CD4-positive, alpha-beta memory T cell (primary cell): ENCODE measurements at regions of chr22 and their contacts with region 1.

Region 1: DNA sequence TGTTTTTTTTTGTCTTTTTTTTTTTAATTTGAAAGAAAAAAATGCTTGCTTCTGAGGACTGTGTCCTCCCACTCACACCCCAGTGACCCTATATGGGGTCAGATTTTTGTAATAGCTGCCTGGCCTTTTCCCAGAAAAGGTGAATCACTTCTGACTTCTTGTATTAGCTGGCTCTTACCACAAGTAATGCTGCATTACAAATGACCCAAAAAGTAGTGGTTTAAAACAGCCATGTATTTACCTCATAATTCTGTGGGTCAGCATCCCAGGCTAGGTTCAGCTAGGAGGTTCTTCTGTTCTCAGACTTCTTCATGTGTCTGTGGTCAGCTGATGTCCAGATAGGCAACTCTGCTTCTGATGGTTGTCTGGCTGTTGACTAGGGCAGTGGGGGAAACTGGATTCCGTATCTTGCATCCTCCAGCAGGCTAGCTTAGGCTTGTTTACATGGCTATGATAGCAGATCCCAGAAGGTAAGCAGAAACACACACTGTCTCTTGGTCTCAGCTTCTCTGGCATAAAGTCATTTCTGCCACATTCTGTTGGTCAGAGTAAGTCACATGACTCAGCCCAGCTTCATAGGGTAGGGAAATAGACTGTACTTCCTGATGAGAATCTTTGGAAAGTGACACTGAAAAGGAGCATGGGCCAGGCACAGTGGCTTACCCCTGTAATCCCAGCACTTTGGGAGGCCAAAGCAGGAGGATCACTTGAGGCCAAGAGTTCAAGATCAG is 19.5 kb downstream of the LHFPL7 start:
- DNase-seq: no peak
- H3K4me3 ChIP-seq: no peak overlapping the region
- H3K4me3 Mint-ChIP-seq: no peak overlapping the region
- H3K27ac ChIP-seq: no peak overlapping the region
- H3K27ac Mint-ChIP-seq: no peak overlapping the region
- H3K4me1 ChIP-seq: no peaks in the 10 kb centered on the region
- H3K4me1 Mint-ChIP-seq: no peaks in the 10 kb centered on the region
- H3K27me3 ChIP-seq: no peaks in the 10 kb centered on the region
- H3K27me3 Mint-ChIP-seq: peaks cover 5 to 7% of the 10 kb centered on the region in 2 donors

Region 2: DNA sequence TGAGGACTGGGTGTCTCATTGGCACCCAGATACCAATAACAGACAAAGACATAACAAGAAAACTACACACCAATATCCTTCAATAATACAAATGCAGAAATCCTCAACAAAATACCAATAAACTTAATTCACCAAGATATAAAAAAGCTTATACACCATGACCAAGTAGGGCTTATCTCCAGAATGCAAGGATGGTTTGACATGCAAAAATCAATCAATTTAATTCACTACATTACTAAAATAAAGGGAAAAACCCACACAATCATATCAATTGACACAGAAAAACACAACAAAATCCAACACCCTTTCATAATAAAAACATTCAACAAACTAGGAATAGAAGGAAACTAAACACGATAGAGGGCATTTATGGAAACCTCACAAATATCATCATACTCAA is 21.1 kb before region 1 on chr22:
- CTCF ChIA-PET with region 1: no interaction called
- POLR2A ChIA-PET with region 1: no interaction called
- intact Hi-C with region 1: no loop called
- DNase-seq: no peak
- H3K4me3 ChIP-seq: no peak overlapping the region
- H3K4me3 Mint-ChIP-seq: no peak overlapping the region
- H3K27ac ChIP-seq: no peak overlapping the region
- H3K27ac Mint-ChIP-seq: no peak overlapping the region
- H3K4me1 ChIP-seq: no peaks in the 10 kb centered on the region
- H3K4me1 Mint-ChIP-seq: no peaks in the 10 kb centered on the region
- H3K27me3 ChIP-seq: no peaks in the 10 kb centered on the region
- H3K27me3 Mint-ChIP-seq: no peaks in the 10 kb centered on the region

Region 3: DNA sequence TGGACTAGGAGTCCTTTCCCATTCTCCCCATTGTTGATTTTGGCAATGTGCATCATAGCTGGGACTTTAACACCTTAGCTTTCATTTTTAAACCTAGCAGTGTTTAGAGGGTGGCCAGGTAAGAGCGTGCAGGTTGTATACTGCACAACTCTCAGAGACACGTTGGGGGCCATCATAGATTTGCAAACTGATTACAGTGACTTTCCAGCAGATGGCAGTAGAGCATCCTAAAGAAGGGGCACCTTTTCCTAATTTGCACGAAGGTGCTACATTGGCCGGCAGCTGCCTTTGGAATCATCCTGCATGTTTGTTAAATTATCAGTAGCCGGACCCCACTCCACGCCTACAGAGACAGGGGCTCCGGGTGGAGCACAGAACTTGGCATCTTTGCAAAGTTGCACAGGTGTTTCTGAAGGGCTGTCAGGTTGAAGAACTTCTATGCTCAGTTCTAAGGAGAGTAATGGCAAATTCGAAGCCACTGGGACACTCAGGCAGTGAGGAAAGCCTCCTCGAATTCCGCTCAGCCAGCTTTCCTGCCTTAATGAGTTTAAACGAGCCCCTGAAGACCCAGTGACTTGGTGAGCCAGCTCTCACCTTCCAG is 11.8 kb after region 1 on chr22:
- CTCF ChIA-PET with region 1: interaction called, 13 read pairs
- POLR2A ChIA-PET with region 1: no interaction called
- intact Hi-C with region 1: no loop called
- DNase-seq: peak in 4 of 5 donors; percentile 38 to 47 (median 42)
- H3K4me3 ChIP-seq: no peak overlapping the region
- H3K4me3 Mint-ChIP-seq: no peak overlapping the region
- H3K27ac ChIP-seq: no peak overlapping the region
- H3K27ac Mint-ChIP-seq: no peak overlapping the region
- H3K4me1 ChIP-seq: no peaks in the 10 kb centered on the region
- H3K4me1 Mint-ChIP-seq: peaks cover 0 to 2% (median 0%) of the 10 kb centered on the region in 4 donors
- H3K27me3 ChIP-seq: no peaks in the 10 kb centered on the region
- H3K27me3 Mint-ChIP-seq: peaks cover 0 to 5% of the 10 kb centered on the region in 2 donors